Heart left ventricle (tissue), 16 donors: ENCODE measurements at regions of chr15 and their contacts with region 1.

Region 1: GRCh38 chr15:91942676-91943576 is 89.4 kb downstream of the SLCO3A1 start:
- DNase-seq: peak in 4 of 5 donors; percentile 81 to 87 (median 86)
- ATAC-seq: peak; percentile 71 to 87 (median 86)
- H3K4me3 ChIP-seq: peak overlapping the region in 8 of 12 donors; percentile 1 to 39 (median 23)
- H3K27ac ChIP-seq: peak overlapping the region in 11 of 12 donors; percentile 30 to 86 (median 66)
- H3K4me1 ChIP-seq: peaks cover 12 to 98% (median 83%) of the 10 kb centered on the region in 12 donors
- H3K27me3 ChIP-seq: no peaks in the 10 kb centered on the region
- CTCF ChIP-seq: no peak
- POLR2A ChIP-seq: no peak

Region 2: DNA sequence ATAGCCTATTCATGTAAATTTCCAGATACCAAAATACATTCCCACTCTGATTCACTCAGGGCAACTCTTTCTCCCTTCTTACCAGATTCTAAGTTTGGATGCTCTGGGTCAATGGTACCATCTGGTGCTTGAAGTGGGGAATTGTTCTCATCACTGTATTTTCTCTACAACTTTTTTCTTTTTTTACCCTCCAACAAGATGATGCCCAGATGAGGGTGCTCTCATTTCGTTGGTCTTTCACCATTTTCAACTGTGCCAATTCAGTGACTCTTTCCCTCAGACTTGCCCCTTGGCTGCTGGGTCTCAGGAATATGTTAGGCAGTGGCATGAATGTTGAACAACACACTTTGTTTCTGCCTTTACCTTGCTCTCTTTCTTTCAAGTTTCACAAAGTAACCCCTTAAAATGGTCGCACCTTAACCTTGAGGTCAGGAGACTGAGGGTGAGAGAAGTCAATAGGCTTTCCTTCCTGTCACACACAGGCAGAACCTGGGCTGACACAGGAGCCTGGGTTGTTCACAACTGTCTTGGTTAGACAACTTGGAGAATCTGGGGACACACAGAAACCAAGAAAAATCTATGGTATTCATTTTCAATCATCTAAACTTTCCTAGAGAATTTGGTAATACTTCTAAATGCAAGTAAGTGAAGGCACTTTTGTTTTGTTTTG is 420.1 kb before region 1 on chr15:
- intact Hi-C with region 1: loop called in 1 of 10 experiments (anchors 10 kb)
- DNase-seq: no peak
- ATAC-seq: peak in 3 of 4 donors; percentile 41 to 64 (median 53)
- H3K4me3 ChIP-seq: no peak overlapping the region
- H3K27ac ChIP-seq: no peak overlapping the region
- H3K4me1 ChIP-seq: peaks cover 0 to 12% (median 0%) of the 10 kb centered on the region in 12 donors
- H3K27me3 ChIP-seq: no peaks in the 10 kb centered on the region
- CTCF ChIP-seq: peak in 11 of 12 donors; percentile 7 to 69 (median 34)
- POLR2A ChIP-seq: no peak